CD4-positive, alpha-beta T cell (primary cell): ENCODE measurements at regions of chr11 and their contacts with region 1.

Region 1: DNA sequence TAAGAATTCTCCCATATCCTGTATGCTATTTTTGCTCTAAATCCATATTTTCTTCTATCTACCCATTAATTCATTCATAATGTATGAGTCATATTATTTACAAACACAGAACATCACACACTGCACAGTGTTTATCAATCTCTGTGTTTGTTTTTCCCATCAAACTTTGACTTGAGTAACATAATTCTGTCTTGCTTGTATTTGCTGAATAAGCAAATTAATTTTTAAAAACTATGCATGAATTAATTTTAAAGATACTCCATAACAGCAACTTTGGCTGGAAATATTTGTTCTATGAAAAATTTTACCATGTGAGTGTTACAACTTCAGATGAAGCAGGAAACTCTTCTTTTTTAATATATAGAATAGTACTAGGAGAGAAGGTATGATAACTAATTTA is 275.6 kb downstream of the GRM5 start:
- DNase-seq: no peak
- ATAC-seq: no peak
- H3K4me3 ChIP-seq: no peak overlapping the region
- H3K4me3 Mint-ChIP-seq: no peak overlapping the region
- H3K27ac ChIP-seq: no peak overlapping the region
- H3K27ac Mint-ChIP-seq: no peak overlapping the region
- H3K4me1 ChIP-seq: no peaks in the 10 kb centered on the region
- H3K4me1 Mint-ChIP-seq: no peaks in the 10 kb centered on the region
- H3K27me3 ChIP-seq: no peaks in the 10 kb centered on the region
- H3K27me3 Mint-ChIP-seq: no peaks in the 10 kb centered on the region
- CTCF ChIP-seq: no peak

Region 2: GRCh38 chr11:87022254-87022653 is 1767.9 kb before region 1 on chr11:
- CTCF ChIA-PET with region 1: no interaction called
- POLR2A ChIA-PET with region 1: no interaction called
- intact Hi-C with region 1: no loop called
- DNase-seq: no peak
- ATAC-seq: no peak
- H3K4me3 ChIP-seq: no peak overlapping the region
- H3K4me3 Mint-ChIP-seq: no peak overlapping the region
- H3K27ac ChIP-seq: no peak overlapping the region
- H3K27ac Mint-ChIP-seq: no peak overlapping the region
- H3K4me1 ChIP-seq: no peaks in the 10 kb centered on the region
- H3K4me1 Mint-ChIP-seq: no peaks in the 10 kb centered on the region
- H3K27me3 ChIP-seq: peaks cover 0 to 2% of the 10 kb centered on the region in 2 experiments
- H3K27me3 Mint-ChIP-seq: peaks cover 13% of the 10 kb centered on the region
- CTCF ChIP-seq: no peak

Region 3: DNA sequence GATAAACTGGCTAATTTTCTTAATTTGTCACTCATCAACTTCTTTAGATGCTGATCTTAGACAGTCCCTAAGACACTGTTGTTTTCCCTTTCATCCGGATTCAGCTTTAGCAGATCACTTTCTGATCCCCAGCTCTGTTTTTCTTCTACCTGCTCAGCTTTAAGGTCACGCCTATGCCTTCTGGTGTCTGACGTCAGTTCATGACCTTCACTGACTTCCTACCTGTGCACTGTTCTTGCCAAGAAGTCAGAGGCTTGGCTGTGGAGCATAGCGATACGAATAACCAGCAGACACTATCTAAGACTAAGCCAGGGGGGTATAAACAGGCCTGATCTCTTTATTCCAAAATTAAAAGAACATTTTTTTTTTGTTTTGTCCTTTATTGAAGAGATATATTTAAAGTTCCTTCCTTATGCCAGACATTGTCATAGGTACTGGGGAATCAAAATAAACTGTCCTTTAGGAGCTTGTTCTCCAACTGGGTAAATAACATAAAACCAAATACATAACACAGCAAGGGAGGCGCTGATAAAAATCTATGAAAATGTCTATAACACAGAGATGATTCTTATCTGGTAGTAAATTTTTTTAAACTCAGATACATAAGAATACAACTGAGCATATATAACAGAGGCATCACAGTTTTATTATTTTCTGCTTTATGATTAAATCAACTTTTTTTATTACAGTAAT is 100.5 kb before region 1 on chr11:
- CTCF ChIA-PET with region 1: no interaction called
- POLR2A ChIA-PET with region 1: no interaction called
- intact Hi-C with region 1: loop called in 1 of 2 experiments (anchors 5 kb)
- DNase-seq: peak in 9 of 14 experiments; percentile 1 to 45 (median 8)
- ATAC-seq: peak; percentile 98
- H3K4me3 ChIP-seq: no peak overlapping the region
- H3K4me3 Mint-ChIP-seq: no peak overlapping the region
- H3K27ac ChIP-seq: no peak overlapping the region
- H3K27ac Mint-ChIP-seq: peak overlapping the region; percentile 13
- H3K4me1 ChIP-seq: no peaks in the 10 kb centered on the region
- H3K4me1 Mint-ChIP-seq: peaks cover 9% of the 10 kb centered on the region
- H3K27me3 ChIP-seq: no peaks in the 10 kb centered on the region
- H3K27me3 Mint-ChIP-seq: no peaks in the 10 kb centered on the region
- CTCF ChIP-seq: no peak

Region 4: DNA sequence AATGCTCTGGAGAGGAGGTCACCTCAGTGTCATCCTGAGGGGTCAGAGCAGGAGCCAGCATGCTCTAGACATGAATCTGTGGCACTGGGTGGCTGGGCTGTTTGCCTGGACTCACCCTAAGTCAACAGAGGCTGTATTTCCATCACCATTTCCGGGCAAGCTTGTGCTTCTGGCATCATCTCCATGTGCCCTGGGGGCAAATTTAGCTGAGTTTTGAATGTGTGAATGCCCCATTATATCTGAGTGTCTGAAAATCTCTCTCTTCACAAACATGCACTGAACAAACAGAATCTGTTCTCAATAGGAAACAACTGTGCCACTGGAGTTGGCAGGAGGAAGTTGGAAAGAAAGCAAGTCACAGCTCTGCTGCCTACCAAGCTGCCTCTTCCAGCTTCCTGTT is 80.6 kb before region 1 on chr11:
- CTCF ChIA-PET with region 1: no interaction called
- POLR2A ChIA-PET with region 1: no interaction called
- intact Hi-C with region 1: no loop called
- DNase-seq: no peak
- ATAC-seq: no peak
- H3K4me3 ChIP-seq: no peak overlapping the region
- H3K4me3 Mint-ChIP-seq: no peak overlapping the region
- H3K27ac ChIP-seq: no peak overlapping the region
- H3K27ac Mint-ChIP-seq: no peak overlapping the region
- H3K4me1 ChIP-seq: no peaks in the 10 kb centered on the region
- H3K4me1 Mint-ChIP-seq: peaks cover 10% of the 10 kb centered on the region
- H3K27me3 ChIP-seq: no peaks in the 10 kb centered on the region
- H3K27me3 Mint-ChIP-seq: no peaks in the 10 kb centered on the region
- CTCF ChIP-seq: no peak

Region 5: GRCh38 chr11:88818978-88819377 is 28.8 kb after region 1 on chr11:
- CTCF ChIA-PET with region 1: no interaction called
- POLR2A ChIA-PET with region 1: no interaction called
- intact Hi-C with region 1: no loop called
- DNase-seq: no peak
- ATAC-seq: no peak
- H3K4me3 ChIP-seq: no peak overlapping the region
- H3K4me3 Mint-ChIP-seq: no peak overlapping the region
- H3K27ac ChIP-seq: no peak overlapping the region
- H3K27ac Mint-ChIP-seq: no peak overlapping the region
- H3K4me1 ChIP-seq: no peaks in the 10 kb centered on the region
- H3K4me1 Mint-ChIP-seq: no peaks in the 10 kb centered on the region
- H3K27me3 ChIP-seq: no peaks in the 10 kb centered on the region
- H3K27me3 Mint-ChIP-seq: no peaks in the 10 kb centered on the region
- CTCF ChIP-seq: no peak